Cardiac septum (tissue), 1 donor: ENCODE measurements at regions of chr12 and their contacts with region 1.

Region 1: GRCh38 chr12:27511031-27511722 is 12.8 kb upstream of the PPFIBP1 start:
- DNase-seq: no peak

Region 2: GRCh38 chr12:27549801-27550652 is 38.9 kb after region 1 on chr12:
- intact Hi-C with region 1: loop called (anchors 5 kb)
- DNase-seq: peak; percentile 88